Activated naive CD4-positive, alpha-beta T cell treated with anti-CD3 and anti-CD28 coated beads for 36 hours (primary cell): ENCODE measurements at regions of chr19 and their contacts with region 1.

Region 1: DNA sequence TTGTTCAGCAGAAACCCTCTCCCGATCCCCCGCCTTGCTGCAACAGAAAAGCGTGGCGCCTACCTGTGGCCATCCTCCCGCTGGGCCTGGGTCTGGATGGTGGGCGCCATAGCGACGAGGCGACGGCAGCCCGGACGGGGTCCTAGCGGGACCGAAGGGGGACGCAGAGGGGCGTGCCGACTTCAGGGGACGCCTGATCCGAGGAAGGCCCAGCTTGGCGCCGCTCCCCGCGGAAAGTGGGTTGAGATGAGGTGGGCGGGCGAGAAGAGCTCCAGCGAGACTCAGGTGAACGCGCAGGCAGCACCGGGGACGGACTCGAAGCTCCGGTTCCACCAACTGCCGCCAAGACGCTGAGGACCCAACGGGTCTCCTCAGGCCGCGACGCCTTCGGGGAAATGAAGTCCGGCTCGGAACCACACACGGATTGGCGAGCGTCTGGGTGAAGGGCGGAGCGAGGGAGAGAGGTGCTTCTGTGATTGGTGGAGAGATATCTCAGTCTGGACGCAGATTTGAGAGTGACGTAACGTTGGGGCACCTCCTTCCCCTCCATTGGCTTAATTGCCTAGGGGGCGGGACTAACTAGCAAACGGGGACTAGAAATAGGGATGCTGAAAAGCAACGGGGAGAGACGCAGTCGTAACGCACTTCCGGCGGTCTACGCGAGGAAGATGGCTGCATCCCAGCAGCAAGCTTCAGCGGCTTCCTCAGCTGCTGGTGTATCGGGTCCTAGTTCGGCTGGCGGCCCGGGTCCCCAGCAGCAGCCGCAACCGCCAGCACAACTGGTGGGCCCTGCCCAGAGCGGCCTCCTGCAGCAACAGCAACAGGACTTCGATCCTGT is at the starts of genes MED29 and PAF1:
- DNase-seq: peak; percentile 98
- H3K4me3 Mint-ChIP-seq: peak within 1 kb of the TSS; percentile 98
- H3K27ac Mint-ChIP-seq: peak within 1 kb of the TSS; percentile 98
- H3K4me1 Mint-ChIP-seq: peaks cover 41% of the 10 kb centered on the region
- H3K27me3 Mint-ChIP-seq: no peaks in the 10 kb centered on the region
- total RNA-seq, gene MED29: 18.0 to 18.5 TPM
- total RNA-seq, gene PAF1: 31.9 to 34.9 TPM

Region 2: DNA sequence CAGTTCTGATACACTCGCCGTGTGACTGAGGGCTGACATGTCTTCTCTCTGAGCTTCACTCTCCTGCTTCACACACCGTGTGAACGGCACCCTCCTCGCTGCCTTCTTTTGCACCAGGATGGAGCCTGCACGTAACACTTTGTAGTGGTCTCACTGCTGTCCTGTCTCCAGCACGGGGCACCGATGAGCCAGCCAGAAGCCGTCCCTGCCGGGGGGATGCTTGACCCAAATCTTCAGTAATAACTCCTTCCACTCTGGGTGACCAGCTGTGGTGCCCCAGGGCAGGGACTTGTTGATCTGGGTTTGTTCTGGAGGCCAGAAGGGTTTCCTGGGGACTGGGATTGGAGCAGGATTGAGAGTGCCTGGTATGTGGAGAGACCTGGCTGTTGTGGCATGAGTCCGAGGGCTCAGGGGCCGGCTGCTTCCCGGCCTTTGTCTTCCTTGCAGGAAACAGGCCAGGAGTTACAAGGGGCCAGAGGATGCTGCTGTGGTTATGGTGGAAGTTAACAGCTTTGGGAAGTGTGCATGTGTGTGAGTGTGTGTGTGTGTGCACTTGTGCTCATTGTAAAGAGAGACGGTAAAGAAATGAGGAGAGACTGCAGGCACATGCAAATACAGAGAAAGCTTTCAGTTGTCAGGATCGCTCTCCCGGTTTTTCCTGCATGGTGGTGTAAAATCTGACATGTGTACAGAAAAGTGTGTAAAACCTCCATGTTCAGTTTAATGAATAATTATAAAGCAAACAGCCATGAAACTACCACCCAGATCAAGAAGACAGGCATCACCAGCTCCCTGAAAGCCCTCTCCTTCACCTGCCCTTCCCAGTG is 246.5 kb before region 1 on chr19:
- CTCF ChIA-PET with region 1: no interaction called
- intact Hi-C with region 1: no loop called
- DNase-seq: no peak
- H3K4me3 Mint-ChIP-seq: no peak overlapping the region
- H3K27ac Mint-ChIP-seq: no peak overlapping the region
- H3K4me1 Mint-ChIP-seq: no peaks in the 10 kb centered on the region
- H3K27me3 Mint-ChIP-seq: no peaks in the 10 kb centered on the region

Region 3: DNA sequence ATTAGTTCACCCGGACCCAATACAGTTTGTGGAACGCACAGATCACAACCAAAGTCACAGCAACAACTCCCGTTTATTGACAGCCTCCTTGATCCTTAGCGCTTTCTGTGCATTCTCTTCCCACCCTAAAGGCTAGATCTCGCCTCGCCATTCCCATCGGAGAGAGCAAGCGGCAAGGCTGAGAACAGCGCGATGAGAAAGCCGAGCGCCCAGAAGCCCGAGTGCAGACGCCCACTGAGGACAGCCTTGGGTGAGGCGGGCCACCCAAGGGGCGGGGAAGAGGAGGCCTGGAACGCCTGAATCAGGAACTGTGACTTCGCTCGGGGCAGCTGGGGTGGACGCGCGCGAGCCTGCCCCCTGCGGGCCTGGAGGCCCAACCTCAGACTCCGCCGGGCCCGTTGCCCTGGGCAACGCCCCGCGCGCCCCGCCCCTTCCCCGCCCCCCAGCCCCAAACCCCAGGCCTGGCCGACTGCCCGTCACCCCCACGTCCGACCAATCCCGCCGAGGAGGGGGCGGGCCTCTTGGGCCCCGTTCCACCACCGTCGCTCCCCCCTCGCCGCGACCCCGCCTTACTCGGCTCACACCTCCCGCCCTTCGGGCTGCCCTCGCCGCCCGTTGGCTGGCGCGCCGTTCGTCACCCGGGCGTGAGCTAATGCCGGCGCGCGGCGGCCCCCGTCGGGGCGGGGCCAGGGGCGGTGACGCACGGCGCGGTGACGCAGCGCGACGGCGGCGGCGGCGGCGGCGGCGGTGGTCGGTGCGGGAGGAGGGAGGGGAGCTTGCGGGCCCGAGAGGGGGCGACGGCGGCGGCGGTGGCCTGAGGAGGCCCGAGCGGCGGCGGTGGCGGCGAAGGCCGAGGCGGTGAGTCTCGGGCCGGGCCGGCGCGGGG is 49.0 kb before region 1 on chr19 and contains the start of gene SAMD4B:
- CTCF ChIA-PET with region 1: interaction called, 3 read pairs
- intact Hi-C with region 1: loop called (anchors 1 kb)
- DNase-seq: peak; percentile 99
- H3K4me3 Mint-ChIP-seq: peak within 1 kb of the TSS; percentile 91
- H3K27ac Mint-ChIP-seq: peak within 1 kb of the TSS; percentile 91
- H3K4me1 Mint-ChIP-seq: peaks cover 65% of the 10 kb centered on the region
- H3K27me3 Mint-ChIP-seq: no peaks in the 10 kb centered on the region
- total RNA-seq, gene SAMD4B: 33.0 to 35.8 TPM

Region 4: DNA sequence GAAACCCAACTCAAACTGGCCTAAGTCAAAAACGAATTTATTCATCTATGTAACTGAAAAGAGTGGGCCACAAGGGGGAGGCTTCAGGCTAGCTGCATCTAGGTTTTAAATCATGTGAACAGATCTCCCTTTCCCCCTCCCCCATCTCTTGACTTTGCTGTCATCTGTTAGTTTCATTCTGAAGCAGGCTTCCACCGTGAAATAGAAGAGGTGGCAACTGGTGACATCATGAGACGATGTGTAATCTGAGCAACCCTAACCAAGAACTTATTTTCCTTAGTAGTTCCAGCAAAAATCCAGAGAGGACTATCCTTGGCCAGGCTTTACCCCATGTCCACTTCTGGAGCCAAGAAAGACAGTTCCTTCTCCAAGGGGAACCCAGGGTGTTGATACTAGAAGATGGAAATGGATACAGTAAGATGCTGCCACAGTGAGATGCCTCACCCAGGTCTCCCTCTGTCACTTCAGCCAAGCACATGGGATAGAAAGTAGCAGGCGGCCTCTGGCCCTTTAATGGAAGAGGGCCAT is 39.4 kb before region 1 on chr19:
- CTCF ChIA-PET with region 1: interaction called, 3 read pairs
- intact Hi-C with region 1: loop called (anchors 1 kb)
- DNase-seq: peak; percentile 82
- H3K4me3 Mint-ChIP-seq: no peak overlapping the region
- H3K27ac Mint-ChIP-seq: peak overlapping the region; percentile 85
- H3K4me1 Mint-ChIP-seq: peaks cover 41% of the 10 kb centered on the region
- H3K27me3 Mint-ChIP-seq: no peaks in the 10 kb centered on the region

Region 5: GRCh38 chr19:39435499-39436349 is 44.8 kb after region 1 on chr19 and contains the start of gene RPS16:
- CTCF ChIA-PET with region 1: interaction called, 3 read pairs
- intact Hi-C with region 1: loop called (anchors 1 kb)
- DNase-seq: peak; percentile 99
- H3K4me3 Mint-ChIP-seq: peak within 1 kb of the TSS; percentile 99
- H3K27ac Mint-ChIP-seq: peak within 1 kb of the TSS; percentile 99
- H3K4me1 Mint-ChIP-seq: peaks cover 54% of the 10 kb centered on the region
- H3K27me3 Mint-ChIP-seq: no peaks in the 10 kb centered on the region
- total RNA-seq, gene RPS16: 4,195 to 4,327 TPM

Region 6: DNA sequence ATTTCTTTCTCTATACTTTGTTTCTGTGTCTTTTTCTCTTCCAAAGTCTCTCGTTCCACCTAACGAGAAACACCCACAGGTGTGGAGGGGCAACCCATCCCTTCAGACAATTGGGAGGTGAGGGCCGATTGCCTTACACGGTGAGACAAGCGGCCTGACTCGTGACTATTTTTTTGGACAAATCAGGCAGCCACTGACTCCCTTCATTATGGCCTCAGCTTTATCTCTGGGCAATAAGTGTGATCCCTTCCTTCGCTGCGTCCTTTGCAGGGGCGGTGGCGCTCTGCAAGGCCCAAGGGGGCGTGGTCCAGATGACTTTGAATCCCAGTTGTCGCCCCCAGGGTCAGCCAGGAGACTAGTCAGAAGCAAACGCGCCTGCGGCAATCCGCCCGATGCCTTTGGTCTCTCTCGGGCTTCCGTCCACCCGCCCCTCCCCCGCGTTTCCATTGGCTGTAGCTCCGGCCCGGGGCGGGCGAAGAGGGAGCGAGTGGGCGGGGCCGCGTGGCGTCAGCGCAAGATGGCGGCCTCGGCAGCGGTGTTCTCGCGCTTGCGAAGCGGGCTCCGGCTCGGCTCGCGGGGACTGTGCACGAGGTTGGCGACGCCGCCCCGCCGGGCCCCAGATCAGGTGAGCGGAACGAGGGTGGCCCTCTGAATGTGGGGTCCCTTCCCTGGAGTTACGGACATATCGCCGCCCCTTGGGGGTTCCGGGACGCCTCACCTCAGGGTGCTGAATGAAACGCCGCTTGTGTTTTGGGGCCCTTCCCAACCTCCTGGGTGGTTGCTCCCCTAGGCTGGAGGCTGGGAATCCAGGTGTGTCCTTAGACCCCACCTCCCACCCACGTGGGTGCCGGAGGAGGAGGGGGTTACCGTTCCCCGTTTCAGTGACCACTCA is 89.6 kb after region 1 on chr19 and contains the start of gene TIMM50:
- CTCF ChIA-PET with region 1: no interaction called
- intact Hi-C with region 1: loop called (anchors 1 kb)
- DNase-seq: peak; percentile 99
- H3K4me3 Mint-ChIP-seq: peak within 1 kb of the TSS; percentile 92
- H3K27ac Mint-ChIP-seq: peak within 1 kb of the TSS; percentile 90
- H3K4me1 Mint-ChIP-seq: peaks cover 27% of the 10 kb centered on the region
- H3K27me3 Mint-ChIP-seq: no peaks in the 10 kb centered on the region
- total RNA-seq, gene TIMM50: 103 to 107 TPM